AG04449 (cell line): ENCODE measurements at regions of chr1 and their contacts with region 1.

Region 1: DNA sequence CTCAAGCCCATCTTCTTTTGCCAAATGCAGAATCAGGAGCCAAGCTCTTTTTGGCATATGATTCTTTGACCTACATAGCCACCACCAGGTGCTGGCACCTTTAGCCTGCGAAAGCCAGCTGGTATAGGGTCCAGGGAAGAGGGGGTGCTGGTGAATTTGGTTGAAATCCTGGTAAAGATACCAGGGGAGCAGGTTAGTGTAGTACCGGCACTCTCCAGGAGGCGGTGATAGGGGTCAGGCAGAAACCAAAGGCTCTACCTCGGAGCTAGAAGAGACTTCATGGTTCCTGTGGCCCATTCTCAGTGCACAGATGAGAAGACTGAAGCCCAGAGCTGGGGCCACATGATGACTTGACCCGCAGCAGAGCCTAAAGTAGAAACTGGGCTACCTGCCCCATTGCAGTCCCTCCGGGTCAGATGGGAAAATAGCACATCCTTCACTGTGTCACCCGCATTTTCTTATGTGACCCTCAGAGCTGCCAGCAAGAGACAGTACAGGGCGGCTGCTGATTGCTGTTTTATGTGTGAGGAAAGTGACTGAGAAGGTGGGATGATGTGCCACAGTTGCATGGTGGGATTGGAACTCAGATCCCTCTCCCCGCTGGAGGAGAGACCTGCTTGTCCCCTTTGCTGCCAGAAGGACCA is 36.0 kb upstream of the IL19 start:
- DNase-seq: no peak
- H3K4me3 ChIP-seq: no peak overlapping the region
- CTCF ChIP-seq: peak; percentile 70

Region 2: GRCh38 chr1:206469933-206470691 is 264.5 kb before region 1 on chr1 and contains the start of gene IKBKE:
- CTCF ChIA-PET with region 1: no interaction called
- POLR2A ChIA-PET with region 1: no interaction called
- DNase-seq: no peak
- H3K4me3 ChIP-seq: peak within 1 kb of the TSS; percentile 93
- CTCF ChIP-seq: peak; percentile 54

Region 3: DNA sequence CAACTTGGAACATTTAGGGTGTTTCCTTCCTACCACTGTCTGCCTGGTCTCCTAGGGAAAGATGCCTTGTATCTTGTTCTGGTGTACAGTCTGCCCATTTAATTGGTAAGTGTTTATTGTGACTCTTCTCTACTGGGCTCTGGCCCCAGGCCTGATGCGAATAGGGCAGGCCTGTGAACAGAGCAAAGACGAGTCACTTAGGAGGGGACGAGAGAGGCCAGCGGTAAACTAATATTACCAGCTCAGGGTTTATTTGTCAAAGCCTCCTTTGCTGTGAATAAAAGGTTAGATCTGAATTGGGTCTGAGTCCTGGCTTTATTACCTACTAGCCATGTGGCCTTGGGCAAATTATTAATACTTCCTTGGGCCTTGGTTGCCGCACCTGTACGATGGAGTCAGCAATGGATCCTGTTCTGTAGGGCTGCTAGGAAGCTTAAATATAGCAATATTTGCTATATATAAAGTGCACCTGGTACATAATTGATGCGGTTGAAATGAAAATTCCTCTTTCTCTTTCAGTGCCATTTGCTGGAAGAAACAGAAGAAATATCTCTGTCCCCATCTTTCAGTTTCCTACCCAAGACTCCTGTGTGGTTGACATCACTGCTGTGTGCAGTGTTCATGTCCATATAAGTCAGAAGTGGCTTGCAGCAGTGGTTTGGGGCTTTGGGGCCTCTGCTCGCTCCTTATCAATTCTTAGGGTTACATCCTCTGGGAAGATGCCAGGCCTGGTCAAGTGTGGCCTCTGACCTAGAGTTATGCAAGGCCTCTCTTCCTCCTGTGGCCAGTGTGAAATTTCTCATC is 17.5 kb before region 1 on chr1:
- CTCF ChIA-PET with region 1: interaction called, 166 read pairs
- POLR2A ChIA-PET with region 1: no interaction called
- DNase-seq: no peak
- H3K4me3 ChIP-seq: no peak overlapping the region
- CTCF ChIP-seq: no peak

Region 4: DNA sequence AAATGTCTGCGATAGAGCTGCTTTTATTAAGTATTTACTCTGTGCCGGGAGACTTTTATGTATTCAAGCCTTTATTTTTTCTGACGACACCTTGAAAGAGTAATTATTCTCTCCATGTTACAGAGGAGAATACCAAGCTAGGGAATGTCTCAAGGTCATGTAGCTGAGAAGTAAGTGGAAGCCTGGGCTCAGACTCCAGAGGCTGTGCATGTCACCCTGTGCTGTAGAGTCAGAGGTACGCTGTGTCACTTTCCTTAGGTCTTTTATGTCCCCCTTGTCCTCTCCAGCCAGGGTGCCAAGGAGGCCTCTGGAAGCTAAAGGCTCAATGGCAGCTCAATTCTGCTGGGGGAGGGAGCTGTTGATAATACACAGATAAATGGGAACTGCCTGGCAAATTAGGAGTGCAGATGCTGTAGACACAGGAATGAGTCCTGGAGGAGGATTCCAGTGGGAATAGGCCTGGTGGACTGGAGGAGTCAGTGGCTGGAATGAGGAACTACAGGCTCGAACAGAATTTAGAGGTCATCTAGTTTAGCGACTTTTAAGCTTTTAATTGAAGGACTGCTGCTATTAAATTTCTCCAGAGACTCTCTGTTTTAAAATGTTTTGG is 26.6 kb after region 1 on chr1:
- CTCF ChIA-PET with region 1: interaction called, 16 read pairs
- POLR2A ChIA-PET with region 1: no interaction called
- DNase-seq: no peak
- H3K4me3 ChIP-seq: no peak overlapping the region
- CTCF ChIP-seq: peak; percentile 36

Region 5: DNA sequence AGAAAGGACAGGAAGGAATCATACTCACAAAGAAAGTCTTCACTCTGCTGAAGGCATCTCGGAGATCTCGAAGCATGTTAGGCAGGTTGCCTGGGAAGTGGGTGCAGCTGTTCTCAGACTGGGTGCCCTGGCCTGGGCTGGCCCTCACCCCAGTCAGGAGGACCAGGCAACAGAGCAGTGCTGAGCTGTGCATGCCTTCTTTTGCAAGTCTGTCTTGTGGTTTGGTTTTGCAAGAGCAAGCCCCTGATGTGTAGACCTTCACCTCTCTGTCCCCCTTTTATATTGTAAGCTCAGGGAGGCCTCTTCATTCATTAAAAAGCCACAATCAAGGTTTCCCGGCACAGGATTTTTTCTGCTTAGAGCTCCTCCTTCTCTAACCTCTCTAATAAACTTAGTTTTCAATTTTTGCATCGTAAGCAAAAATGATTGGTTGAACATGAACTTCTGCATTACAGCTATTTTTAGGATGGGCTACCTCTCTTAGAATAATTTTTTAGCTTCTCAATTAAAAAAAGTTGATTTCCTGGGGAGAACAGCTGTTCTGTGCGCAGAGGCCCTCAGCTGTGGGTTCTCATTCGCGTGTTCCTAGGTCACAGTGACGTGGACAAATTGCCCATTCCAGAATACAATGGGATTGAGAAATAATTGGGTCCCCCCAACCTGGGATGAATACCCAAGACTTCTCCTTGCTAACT is 37.8 kb after region 1 on chr1 and contains the start of gene IL10:
- CTCF ChIA-PET with region 1: interaction called, 10 read pairs
- POLR2A ChIA-PET with region 1: no interaction called
- DNase-seq: no peak
- H3K4me3 ChIP-seq: no peak within 1 kb of the TSS
- CTCF ChIP-seq: no peak